Cardiac septum (tissue), 1 donor: ENCODE measurements at regions of chr9 and their contacts with region 1.

Region 1: DNA sequence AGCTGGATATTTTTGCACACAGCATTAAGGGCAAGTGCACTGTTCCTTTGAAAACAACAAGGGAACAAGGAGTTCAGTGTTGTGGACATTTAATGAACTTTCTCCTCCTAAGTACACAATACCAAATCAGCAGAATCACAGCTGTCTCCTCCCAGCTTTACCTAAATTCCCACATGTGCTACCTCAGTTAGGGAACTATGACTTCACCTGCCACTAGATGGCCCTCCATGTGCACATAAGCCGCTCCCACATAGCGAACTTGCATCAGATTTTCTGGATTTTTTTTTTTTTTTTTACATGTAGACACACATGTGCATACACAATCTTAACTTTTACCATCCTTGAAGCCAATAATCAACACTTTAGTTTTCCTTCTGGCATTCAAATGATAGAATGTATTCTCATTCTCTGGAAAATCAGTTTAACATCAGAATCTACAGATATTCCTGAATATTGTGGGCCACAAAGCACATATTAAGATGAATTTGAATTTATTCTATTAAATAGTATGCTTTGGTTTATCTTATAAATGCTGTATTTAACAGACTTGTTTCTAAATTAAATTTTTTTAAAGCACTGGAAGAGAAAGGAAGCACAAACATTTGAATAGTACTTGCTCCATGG is 123.6 kb downstream of the PALM2AKAP2 start:
- DNase-seq: no peak

Region 2: DNA sequence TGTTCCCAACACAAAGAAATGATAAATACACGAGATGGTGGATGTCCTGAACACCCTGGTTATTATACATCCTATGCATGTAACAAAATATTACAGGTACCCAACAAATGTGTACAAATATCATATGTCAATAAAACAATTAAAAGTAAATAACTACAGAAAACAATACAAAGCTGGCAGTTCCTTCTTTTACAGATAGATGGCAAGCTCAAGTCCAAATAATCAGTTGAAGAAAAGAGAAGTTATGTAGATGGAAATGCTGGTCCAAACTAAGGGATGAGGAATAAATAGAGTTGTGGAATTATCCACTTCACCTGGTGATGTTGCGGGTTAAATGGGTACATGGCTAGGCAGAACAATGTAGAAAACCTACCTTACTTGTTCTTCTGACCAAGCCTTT is 44.2 kb before region 1 on chr9:
- intact Hi-C with region 1: no loop called
- DNase-seq: no peak

Region 3: DNA sequence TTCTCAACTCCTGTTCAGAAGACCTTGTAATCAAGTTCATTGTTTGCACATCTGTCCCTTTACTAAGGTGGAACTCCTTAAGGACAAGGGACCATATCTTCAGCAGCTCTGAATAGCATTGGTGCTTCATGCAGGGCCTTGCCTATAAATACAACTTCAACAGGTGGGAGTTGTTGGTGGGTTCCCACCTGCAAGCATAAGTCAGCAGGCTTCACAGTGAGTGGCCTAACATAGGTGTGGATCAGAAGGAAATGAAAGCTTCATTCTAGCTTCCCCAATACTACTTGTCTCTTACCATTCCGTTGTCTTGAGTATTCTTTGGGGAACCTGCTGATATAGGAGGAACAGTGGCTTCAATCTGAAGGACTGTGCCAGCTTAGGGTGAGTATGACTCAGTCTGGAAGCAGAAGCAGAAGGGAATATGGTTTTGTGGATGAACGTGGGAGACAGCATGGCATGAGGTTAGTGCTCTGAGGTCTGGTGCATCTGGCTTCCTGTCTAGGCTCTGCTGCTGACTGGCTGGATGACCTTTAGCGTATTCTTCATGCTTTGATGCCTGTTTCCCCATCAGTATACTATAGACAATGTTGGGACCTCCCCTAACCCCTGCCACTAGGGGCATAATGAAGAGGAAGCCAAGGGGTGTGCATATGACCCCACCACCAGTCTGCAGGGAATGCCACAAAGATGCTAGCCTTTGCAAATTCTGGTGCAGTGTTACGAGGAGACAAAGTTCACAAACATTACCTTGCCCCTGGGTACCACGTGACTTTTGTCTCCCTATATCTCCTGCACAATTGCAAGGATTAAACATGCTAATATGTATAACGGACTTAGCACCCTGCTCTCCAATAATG is 68.6 kb after region 1 on chr9:
- intact Hi-C with region 1: loop called (anchors 5 kb)
- DNase-seq: no peak

Region 4: GRCh38 chr9:110058304-110058953 is 154.8 kb after region 1 on chr9:
- intact Hi-C with region 1: loop called (anchors 2 kb)
- DNase-seq: no peak

Region 5: DNA sequence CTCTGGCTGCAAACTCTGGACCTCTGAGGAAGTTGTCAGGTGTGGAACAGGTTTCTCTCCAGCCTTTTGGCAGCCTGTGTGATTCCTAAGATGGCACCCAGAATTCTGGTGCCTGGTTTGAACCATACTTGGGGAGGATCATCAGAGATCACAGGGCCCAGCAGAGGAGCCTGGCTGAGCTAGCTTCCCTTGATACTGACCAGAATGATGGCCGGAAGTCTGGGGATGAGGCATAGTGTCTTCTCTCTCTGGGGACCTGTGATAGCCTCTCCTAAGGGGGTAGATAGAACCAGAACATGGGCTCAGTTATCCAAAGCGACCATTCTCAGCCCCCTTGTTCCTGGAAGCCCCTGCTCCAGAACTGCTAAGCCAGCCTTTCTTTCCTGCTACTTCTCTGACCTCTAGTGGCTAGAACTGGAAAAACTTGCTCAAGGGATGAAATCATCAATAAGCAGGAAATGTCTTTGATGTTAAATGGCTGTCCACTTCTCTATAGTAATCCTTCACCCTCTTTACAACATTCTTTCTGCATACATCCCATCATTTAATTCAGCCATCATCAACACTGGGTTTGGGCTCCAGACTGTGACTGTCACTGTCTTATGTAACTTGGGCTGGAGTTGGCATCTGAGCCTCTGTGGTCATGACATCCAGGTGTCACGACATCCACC is 249.2 kb after region 1 on chr9:
- intact Hi-C with region 1: loop called (anchors 2 kb)
- DNase-seq: no peak

Region 6: DNA sequence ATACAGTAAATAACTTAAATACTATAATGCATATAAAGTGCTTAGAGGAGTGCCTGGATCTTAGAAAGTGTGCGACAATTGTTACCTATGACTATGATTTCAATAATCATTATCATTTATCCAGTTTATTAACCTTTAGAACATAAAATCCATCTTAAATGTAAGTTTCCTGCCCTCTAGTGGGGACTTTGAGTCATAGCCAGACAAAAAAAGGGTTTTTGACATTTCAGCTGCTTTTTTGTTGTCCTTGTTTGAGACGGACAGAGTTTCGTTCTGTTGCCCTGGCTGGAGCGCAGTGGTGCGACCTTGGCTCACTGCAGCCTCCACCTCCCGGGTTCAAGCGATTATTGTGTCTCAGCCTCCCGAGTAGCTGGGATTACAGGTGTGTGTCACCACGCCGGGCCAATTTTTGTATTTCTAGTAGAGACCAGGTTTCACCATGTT is 314.1 kb after region 1 on chr9:
- intact Hi-C with region 1: loop called (anchors 5 kb)
- DNase-seq: no peak